ENCODE measurements at regions of chr7 and their contacts with region 1.

Region 1: DNA sequence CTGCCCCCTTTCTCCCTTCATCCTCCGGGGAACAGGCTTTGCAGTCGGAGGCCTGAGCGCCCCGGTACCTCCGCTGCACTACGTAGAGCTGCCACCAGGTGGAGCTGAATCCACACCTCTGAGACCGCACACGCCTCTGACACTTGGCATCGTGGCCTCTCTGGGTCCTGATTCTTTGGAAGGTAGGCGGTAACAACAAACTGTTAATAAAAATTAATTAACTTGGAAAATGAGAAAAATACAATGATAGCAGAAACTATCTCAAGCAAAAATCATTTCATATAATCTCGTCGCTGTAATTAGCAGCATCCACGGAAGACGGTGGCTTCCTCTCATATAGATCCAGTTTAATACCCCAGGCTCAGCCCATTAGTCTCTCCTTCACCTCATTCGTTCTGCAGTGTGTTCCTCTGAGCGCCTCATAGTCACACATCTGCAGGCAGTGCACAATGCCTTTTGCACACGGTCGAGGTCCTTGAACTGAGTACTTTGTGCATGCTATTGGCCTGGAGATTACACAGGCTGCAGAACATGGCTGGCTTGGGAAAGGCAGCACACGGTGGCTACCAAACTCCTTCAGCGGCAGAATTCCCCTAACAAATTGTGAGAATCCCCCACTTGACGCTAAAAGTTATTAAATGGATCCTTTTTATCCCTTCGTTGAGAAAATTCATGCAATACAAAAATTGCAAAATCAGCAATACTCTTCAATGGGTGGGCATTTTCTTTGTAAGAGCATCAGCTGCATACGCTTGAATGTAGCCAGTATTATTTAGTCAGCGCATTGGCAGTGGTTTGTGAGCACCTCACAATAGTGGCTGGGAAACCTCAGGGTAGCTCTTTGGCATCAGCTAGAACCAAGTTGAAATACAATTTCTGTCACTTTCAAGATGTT is 18.7 kb downstream of the OR9A2 start:
- DNase-seq: peak; percentile 51
- ATAC-seq: peak; percentile 95
- H3K4me3 ChIP-seq: no peak overlapping the region
- H3K27ac ChIP-seq: no peak overlapping the region
- H3K4me1 ChIP-seq: no peaks in the 10 kb centered on the region
- H3K27me3 ChIP-seq: peaks cover 12% of the 10 kb centered on the region
- CTCF ChIP-seq: peak; percentile 94

Region 2: GRCh38 chr7:141731476-141732149 is 1276.6 kb before region 1 on chr7:
- CTCF ChIA-PET with region 1: no interaction called
- POLR2A ChIA-PET with region 1: no interaction called
- in situ Hi-C with region 1: no loop called
- intact Hi-C with region 1: no loop called
- DNase-seq: no peak
- ATAC-seq: no peak
- H3K4me3 ChIP-seq: no peak overlapping the region
- H3K27ac ChIP-seq: no peak overlapping the region
- H3K4me1 ChIP-seq: no peaks in the 10 kb centered on the region
- H3K27me3 ChIP-seq: no peaks in the 10 kb centered on the region
- CTCF ChIP-seq: no peak

Region 3: DNA sequence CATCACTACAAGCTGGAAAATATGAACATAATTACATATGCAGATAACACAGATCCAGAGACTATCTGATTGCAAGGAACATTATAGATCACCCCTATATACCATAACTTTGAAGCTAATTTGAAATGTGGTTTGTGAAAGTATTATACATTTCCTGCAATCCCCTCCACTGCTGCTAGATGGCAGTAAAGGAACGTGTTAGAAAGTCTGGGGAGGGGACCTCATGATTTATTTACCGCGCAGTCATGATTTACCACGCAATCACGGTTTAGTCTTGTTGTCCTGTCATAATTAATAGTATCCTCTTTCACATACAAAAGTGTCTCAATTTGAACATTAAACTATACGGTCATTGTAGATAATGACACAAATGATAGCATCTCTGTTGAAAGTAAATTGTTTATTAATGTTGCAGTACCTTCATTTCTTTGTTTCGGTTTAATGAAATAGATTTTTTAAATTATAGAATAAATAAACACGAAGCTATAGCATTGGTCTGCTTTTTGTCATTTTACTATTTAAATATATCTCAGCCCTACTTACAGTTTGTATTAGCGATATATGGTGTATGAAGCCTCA is 404.3 kb before region 1 on chr7:
- CTCF ChIA-PET with region 1: no interaction called
- POLR2A ChIA-PET with region 1: no interaction called
- in situ Hi-C with region 1: no loop called
- intact Hi-C with region 1: loop called (anchors 5 kb)
- DNase-seq: peak; percentile 64
- ATAC-seq: no peak
- H3K4me3 ChIP-seq: no peak overlapping the region; a peak in 1 of 4 replicates
- H3K27ac ChIP-seq: no peak overlapping the region
- H3K4me1 ChIP-seq: no peaks in the 10 kb centered on the region; the same call in 1 of the 2 replicates
- H3K27me3 ChIP-seq: 0 out of 2 replicates have a peak, but pooled peaks cover 6% of the 10 kb centered on the region
- CTCF ChIP-seq: peak; percentile 80; the same call in 1 of the 2 replicates

Region 4: GRCh38 chr7:142632291-142633134 is 375.7 kb before region 1 on chr7:
- CTCF ChIA-PET with region 1: no interaction called
- POLR2A ChIA-PET with region 1: no interaction called
- in situ Hi-C with region 1: no loop called
- intact Hi-C with region 1: loop called (anchors 10 kb)
- DNase-seq: peak; percentile 72
- ATAC-seq: peak; percentile 91
- H3K4me3 ChIP-seq: no peak overlapping the region
- H3K27ac ChIP-seq: no peak overlapping the region
- H3K4me1 ChIP-seq: no peaks in the 10 kb centered on the region
- H3K27me3 ChIP-seq: peaks cover 13% of the 10 kb centered on the region
- CTCF ChIP-seq: peak; percentile 83

Region 5: DNA sequence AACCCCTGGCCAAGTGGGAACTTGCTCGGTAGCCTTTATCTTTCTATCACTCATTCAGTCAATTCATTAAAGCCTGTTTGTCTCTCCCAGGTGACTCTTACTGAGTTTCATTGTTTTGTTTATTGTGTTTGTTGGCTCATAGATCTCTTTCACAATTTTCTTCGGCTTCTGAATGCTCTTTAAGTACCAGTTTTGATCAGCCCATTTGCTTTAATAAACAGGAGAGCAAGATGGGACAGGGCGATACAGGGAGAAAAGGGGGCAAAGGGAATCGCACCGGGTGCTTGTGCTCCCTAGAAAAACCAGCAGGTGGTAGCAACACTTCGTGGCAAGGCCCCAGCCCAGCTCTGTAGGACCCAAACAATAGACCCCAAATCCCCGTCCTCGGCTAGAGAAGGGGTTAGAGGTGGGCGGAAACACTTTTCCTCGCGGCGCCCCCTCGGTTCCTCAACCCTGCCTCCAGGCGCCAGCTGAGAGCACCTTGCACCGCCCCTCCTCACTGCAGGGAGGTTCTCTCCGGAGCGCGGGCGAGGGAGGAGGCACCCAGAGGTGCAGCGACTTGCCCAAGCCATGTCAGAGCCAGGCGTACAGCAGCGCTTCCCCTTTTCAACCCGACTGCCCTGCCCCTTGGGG is 154.4 kb before region 1 on chr7:
- CTCF ChIA-PET with region 1: no interaction called
- POLR2A ChIA-PET with region 1: no interaction called
- in situ Hi-C with region 1: no loop called
- intact Hi-C with region 1: loop called (anchors 1 kb)
- DNase-seq: peak; percentile 61
- ATAC-seq: peak; percentile 89
- H3K4me3 ChIP-seq: peak overlapping the region; percentile 56 to 79
- H3K27ac ChIP-seq: no peak overlapping the region
- H3K4me1 ChIP-seq: no peaks in the 10 kb centered on the region; the same call in 1 of the 2 replicates
- H3K27me3 ChIP-seq: peaks cover 27% of the 10 kb centered on the region
- CTCF ChIP-seq: peak; percentile 90

Region 6: DNA sequence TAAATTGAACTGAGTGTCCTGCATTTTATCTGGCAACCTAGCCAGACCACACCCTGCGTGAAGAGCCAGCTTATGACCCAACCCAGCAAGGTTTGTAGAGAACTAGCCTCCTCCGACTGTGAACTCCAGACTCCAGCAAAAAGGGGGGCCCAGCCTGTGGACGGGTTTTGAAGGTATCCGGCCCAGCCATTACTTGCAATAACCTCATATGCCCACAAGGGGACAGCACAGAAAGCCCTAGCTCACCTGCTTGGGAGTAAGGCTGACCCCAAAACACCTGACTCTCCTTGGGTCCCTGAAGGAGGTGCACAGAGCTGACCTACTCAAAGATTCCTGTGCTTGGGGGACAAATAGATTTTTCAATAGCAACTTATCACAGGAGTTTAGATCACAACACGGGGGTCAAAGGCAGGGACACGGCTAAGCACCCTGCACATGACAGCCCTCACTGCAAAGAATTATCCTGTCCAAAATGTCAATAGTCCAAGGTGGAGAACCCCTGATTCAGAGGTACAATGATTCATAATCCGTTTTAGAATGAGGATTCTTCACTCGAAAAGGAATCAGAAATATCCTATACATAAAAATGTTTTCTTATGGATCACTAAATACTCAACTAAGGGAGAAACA is 127.3 kb before region 1 on chr7:
- CTCF ChIA-PET with region 1: no interaction called
- POLR2A ChIA-PET with region 1: no interaction called
- in situ Hi-C with region 1: no loop called
- intact Hi-C with region 1: loop called (anchors 2 kb)
- DNase-seq: peak; percentile 41
- ATAC-seq: no peak; the same call in 1 of the 2 replicates
- H3K4me3 ChIP-seq: no peak overlapping the region
- H3K27ac ChIP-seq: no peak overlapping the region
- H3K4me1 ChIP-seq: no peaks in the 10 kb centered on the region
- H3K27me3 ChIP-seq: peaks cover 13% of the 10 kb centered on the region
- CTCF ChIP-seq: peak; percentile 84

Region 7: DNA sequence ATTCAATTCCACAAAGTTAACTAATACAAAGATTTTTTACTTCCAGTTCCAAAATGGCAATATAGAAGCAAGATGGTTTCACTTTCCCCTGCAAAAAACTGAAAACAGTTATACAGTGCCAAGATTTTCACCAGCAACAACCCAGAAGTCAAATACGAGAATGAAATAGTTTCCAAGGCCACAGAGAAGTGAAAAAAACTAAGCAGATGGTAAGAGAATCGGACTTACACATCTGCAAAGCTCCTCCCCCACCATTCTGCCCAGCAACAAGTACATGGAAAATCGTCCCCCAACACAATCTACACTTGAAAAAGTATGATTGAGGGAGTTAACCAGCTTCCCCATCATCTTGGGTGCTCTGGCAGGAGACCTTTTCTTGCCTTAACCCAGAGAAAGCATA is 15.8 kb before region 1 on chr7:
- CTCF ChIA-PET with region 1: no interaction called
- POLR2A ChIA-PET with region 1: no interaction called
- in situ Hi-C with region 1: no loop called
- intact Hi-C with region 1: no loop called
- DNase-seq: no peak
- ATAC-seq: no peak
- H3K4me3 ChIP-seq: no peak overlapping the region
- H3K27ac ChIP-seq: no peak overlapping the region
- H3K4me1 ChIP-seq: no peaks in the 10 kb centered on the region
- H3K27me3 ChIP-seq: no peaks in the 10 kb centered on the region
- CTCF ChIP-seq: no peak

Region 8: GRCh38 chr7:143027683-143028082 is 19.4 kb after region 1 on chr7:
- CTCF ChIA-PET with region 1: no interaction called
- POLR2A ChIA-PET with region 1: no interaction called
- in situ Hi-C with region 1: no loop called
- intact Hi-C with region 1: no loop called
- DNase-seq: no peak
- ATAC-seq: no peak
- H3K4me3 ChIP-seq: no peak overlapping the region
- H3K27ac ChIP-seq: no peak overlapping the region
- H3K4me1 ChIP-seq: no peaks in the 10 kb centered on the region
- H3K27me3 ChIP-seq: no peaks in the 10 kb centered on the region
- CTCF ChIP-seq: no peak

Region 9: GRCh38 chr7:143214789-143215679 is 206.8 kb after region 1 on chr7:
- CTCF ChIA-PET with region 1: interaction called, 66 read pairs
- POLR2A ChIA-PET with region 1: no interaction called
- in situ Hi-C with region 1: loop called (anchors 25 kb)
- intact Hi-C with region 1: loop called (anchors 1 kb)
- DNase-seq: peak; percentile 89
- ATAC-seq: peak; percentile 88
- H3K4me3 ChIP-seq: no peak overlapping the region
- H3K27ac ChIP-seq: no peak overlapping the region
- H3K4me1 ChIP-seq: no peaks in the 10 kb centered on the region
- H3K27me3 ChIP-seq: peaks cover 3% of the 10 kb centered on the region; the same call in 1 of the 2 replicates
- CTCF ChIP-seq: peak; percentile 97